Activated T-helper 1 cell treated with anti-CD3 and anti-CD28 coated beads, Interleukin-12 subunit alpha, Interleukin-12 subunit beta, Interleukin-2, Interleukin-4 antibody, amounts not matched to agents 30 ng/mL and 10 ng/mL and 1 ng/mL, durations not matched to agents 14 hours and 24 hours and 36 hours (primary cell): ENCODE measurements at regions of chr20 and their contacts with region 1.

Region 1: DNA sequence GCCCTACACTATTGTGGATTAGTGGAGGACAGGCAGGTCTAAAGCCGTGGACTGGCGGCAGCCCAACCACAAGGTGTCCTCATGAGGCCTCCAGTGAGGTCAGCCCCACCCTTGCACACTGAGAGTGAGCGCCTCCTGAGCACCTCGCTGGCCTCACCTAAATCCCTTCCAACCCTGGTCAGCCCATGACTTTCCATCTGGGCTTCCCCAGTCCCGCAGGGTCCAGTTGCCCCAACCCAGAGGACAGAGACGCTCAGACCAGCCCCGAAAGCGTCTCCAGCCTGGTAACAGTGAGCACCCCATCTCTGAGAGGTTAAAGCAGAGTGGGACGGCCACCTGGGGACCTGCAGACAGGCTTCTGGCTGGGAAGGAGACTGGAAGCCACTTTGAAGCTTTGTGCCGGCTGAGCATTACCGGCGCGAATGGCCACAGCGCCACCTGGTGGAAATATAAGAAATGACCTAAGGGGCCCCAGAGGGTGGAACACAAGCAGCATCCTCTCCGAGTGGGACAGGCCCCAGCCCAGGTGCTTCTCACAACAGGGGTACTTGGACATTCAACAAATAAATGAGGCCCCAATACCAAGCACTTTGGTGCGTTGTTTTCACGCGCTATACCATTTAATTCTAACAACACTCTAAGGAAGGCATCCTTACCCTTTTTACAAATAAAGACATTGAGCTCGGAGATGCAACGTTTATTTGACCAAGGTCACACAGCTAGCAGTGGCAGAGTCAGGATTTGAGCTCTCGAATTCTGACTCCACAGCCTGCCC is 65.7 kb upstream of the TOP1 start:
- DNase-seq: peak; percentile 63
- H3K4me3 Mint-ChIP-seq: no peak overlapping the region
- H3K27ac Mint-ChIP-seq: no peak overlapping the region
- H3K4me1 Mint-ChIP-seq: peaks cover 8% of the 10 kb centered on the region
- H3K27me3 Mint-ChIP-seq: peaks cover 15% of the 10 kb centered on the region

Region 2: DNA sequence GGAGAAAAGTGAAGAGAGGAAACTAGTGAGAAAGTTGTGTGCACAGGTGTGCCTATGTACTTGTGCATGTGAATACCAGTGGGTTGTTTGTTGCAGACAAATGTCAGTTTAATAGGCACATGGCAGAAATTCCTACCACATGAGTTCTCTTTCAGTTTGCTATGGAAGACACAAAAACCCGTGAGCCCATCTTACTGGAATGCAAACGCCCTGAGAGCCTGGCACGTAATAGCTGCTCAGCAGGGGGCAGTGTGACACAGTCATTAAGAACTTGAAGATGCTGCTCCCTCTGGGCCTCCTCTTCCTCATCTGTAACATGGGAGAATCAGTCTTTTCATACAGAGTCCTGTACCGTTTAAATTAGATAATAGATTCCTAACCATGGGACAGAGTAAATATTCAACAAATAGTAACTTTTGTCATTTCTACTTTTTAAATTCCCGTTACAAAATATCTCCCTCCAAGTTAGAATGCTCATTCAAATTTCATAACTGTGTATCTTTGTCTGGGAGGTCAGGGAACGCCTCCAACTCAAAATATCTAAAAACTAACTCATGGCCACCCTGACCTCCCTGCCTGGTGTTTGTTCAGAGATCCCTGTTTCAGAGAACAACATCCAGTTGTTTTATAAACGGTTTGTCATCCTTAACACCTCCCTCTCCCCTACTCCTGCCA is 1076.8 kb before region 1 on chr20:
- intact Hi-C with region 1: loop called (anchors 2 kb)
- DNase-seq: no peak
- H3K4me3 Mint-ChIP-seq: no peak overlapping the region
- H3K27ac Mint-ChIP-seq: no peak overlapping the region
- H3K4me1 Mint-ChIP-seq: no peaks in the 10 kb centered on the region
- H3K27me3 Mint-ChIP-seq: no peaks in the 10 kb centered on the region

Region 3: DNA sequence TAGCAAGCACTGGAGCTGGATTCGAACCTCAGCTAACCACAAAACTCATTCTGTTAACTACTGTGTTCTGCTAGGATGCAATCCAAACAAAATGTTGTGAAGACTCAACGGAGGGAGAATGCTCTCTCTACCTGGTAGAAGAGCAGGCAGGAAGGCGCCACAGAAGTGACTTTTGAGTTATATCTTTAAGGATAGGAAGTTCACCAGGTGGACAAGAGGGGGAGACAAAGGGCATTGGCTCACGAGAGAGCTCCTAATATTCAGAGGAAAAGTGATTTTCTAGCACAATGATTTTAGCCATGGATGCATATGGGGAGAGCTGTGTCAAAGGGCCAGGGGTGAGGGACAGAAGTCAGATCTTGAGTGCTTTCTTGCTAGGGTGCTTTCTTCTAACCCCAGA is 165.5 kb before region 1 on chr20:
- intact Hi-C with region 1: loop called (anchors 1 kb)
- DNase-seq: no peak
- H3K4me3 Mint-ChIP-seq: no peak overlapping the region
- H3K27ac Mint-ChIP-seq: no peak overlapping the region
- H3K4me1 Mint-ChIP-seq: no peaks in the 10 kb centered on the region
- H3K27me3 Mint-ChIP-seq: peaks cover 15% of the 10 kb centered on the region

Region 4: GRCh38 chr20:41078329-41078728 is 115.4 kb after region 1 on chr20:
- intact Hi-C with region 1: loop called (anchors 5 kb)
- DNase-seq: no peak
- H3K4me3 Mint-ChIP-seq: peak overlapping the region; percentile 3
- H3K27ac Mint-ChIP-seq: peak overlapping the region; percentile 9
- H3K4me1 Mint-ChIP-seq: peaks cover 83% of the 10 kb centered on the region
- H3K27me3 Mint-ChIP-seq: no peaks in the 10 kb centered on the region

Region 5: GRCh38 chr20:41161886-41162285 is 199.0 kb after region 1 on chr20:
- intact Hi-C with region 1: loop called (anchors 1 kb)
- DNase-seq: no peak
- H3K4me3 Mint-ChIP-seq: peak overlapping the region; percentile 24
- H3K27ac Mint-ChIP-seq: peak overlapping the region; percentile 80
- H3K4me1 Mint-ChIP-seq: peaks cover 59% of the 10 kb centered on the region
- H3K27me3 Mint-ChIP-seq: no peaks in the 10 kb centered on the region